ENCODE measurements at regions of chr2 and their contacts with region 1.

Region 1: GRCh38 chr2:183259921-183260320 is 135.7 kb downstream of the NUP35 start:
- DNase-seq: no peak
- H3K4me3 ChIP-seq: no peak overlapping the region
- H3K27ac ChIP-seq: no peak overlapping the region
- H3K4me1 ChIP-seq: peaks cover 0 to 3% (median 1%) of the 10 kb centered on the region in 4 experiments; a peak in 4 of 7 replicates
- H3K27me3 ChIP-seq: no peaks in the 10 kb centered on the region
- CTCF ChIP-seq: no peak
- EP300 ChIP-seq: no peak
- POLR2A ChIP-seq: no peak
- RAD21 ChIP-seq: no peak

Region 2: DNA sequence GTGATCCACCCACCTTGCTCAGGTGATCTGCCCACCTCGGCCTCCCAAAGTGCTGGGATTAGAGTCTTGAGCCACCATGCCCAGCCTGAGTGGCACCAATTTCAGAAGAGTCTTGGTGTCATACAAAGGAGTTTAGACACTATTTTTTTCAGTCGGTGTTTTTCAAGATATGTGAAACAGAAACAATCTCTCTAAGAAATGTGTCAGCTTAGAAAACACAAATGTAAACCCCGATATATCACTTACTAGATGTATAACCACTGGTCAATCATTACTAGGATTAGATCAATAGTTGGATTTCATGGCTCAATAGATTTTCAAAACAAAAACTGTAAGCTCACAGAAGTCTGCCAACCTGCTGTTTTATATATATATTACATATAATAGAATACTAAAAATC is 326.3 kb before region 1 on chr2:
- CTCF ChIA-PET with region 1: no interaction called
- POLR2A ChIA-PET with region 1: no interaction called
- DNase-seq: no peak
- H3K4me3 ChIP-seq: no peak overlapping the region
- H3K27ac ChIP-seq: no peak overlapping the region
- H3K4me1 ChIP-seq: peaks cover 0 to 2% (median 0%) of the 10 kb centered on the region in 4 experiments; a peak in 1 of 7 replicates
- H3K27me3 ChIP-seq: no peaks in the 10 kb centered on the region
- CTCF ChIP-seq: no peak
- EP300 ChIP-seq: no peak
- POLR2A ChIP-seq: no peak
- RAD21 ChIP-seq: no peak

Region 3: DNA sequence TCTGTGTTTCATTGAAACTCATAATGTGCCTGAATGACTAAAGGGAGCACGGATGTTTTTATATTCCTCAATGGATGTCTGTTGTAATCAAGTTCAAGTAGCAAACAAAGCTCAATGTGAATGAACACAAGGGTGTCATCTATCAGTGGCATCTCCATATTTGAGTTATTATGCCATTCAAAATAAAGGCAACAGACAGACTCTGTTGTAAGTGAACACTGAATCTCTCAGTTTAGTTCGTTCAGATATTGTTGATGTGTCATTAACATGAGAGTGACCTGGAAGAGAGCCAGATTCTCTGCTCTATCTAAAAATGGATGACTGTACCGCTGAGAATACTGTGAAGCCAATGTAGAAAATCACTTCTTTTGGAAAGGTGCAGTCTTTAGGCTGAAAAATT is 17.0 kb before region 1 on chr2:
- CTCF ChIA-PET with region 1: interaction called, 30 read pairs
- POLR2A ChIA-PET with region 1: no interaction called
- DNase-seq: no peak
- H3K4me3 ChIP-seq: no peak overlapping the region
- H3K27ac ChIP-seq: no peak overlapping the region
- H3K4me1 ChIP-seq: peaks cover 0 to 2% (median 0%) of the 10 kb centered on the region in 4 experiments; a peak in 1 of 7 replicates
- H3K27me3 ChIP-seq: no peaks in the 10 kb centered on the region
- CTCF ChIP-seq: no peak
- EP300 ChIP-seq: no peak
- POLR2A ChIP-seq: no peak
- RAD21 ChIP-seq: no peak

Region 4: GRCh38 chr2:183248866-183249567 is 10.9 kb before region 1 on chr2:
- CTCF ChIA-PET with region 1: interaction called, 30 read pairs
- POLR2A ChIA-PET with region 1: no interaction called
- DNase-seq: no peak
- H3K4me3 ChIP-seq: no peak overlapping the region
- H3K27ac ChIP-seq: no peak overlapping the region
- H3K4me1 ChIP-seq: peaks cover 0 to 2% (median 0%) of the 10 kb centered on the region in 4 experiments; a peak in 1 of 7 replicates
- H3K27me3 ChIP-seq: no peaks in the 10 kb centered on the region
- CTCF ChIP-seq: peak in 1 of 3 experiments; percentile 51; a peak in 1 of 4 replicates
- EP300 ChIP-seq: no peak
- POLR2A ChIP-seq: no peak
- RAD21 ChIP-seq: peak; percentile 59 to 67